ENCODE measurements at regions of chr3 and their contacts with region 1.

Region 1: GRCh38 chr3:177810162-177810623 is 612.9 kb upstream of the TBL1XR1 start:
- DNase-seq: no peak
- ATAC-seq: peak; percentile 58
- H3K4me3 ChIP-seq: no peak overlapping the region
- H3K27ac ChIP-seq: no peak overlapping the region
- H3K4me1 ChIP-seq: no peaks in the 10 kb centered on the region
- H3K27me3 ChIP-seq: no peaks in the 10 kb centered on the region

Region 2: DNA sequence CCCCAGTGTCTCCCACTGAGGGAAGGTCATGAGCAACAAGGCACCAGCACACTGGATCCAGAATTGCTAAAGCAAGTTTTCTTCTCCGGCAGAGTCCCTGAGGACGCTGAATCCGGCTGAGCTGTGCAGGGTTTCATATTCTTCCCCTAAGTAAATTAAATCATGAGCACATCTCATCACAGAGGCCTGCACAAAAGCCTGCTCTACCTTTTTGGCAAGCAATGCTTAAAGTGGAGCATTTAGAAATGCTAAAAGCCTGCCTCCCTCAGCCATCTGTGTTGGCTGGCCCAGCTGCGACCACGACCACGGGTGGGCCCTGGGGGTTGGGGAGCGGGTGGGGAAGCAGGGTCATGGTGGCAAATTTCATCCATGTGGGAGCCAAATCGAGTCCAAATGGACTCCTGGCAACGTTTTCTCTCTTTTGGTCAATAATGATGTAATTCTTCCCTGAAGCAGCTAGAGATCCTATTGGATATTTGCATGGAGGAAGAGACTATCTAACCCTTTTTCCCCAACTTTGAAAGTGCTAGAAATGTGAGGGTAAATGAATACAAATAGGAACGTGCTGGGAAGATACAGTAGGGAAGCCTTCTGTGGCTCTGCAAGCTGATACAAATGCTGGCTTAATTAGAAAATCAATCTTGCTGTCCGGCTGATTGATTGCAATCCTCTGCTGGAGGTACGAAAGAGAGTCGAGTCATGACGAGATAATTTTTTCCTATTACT is 80.1 kb before region 1 on chr3:
- intact Hi-C with region 1: loop called in 1 of 2 experiments (anchors 2 kb)
- DNase-seq: peak in 1 of 2 donors; percentile 59
- ATAC-seq: peak; percentile 86
- H3K4me3 ChIP-seq: no peak overlapping the region
- H3K27ac ChIP-seq: no peak overlapping the region
- H3K4me1 ChIP-seq: peaks cover 0 to 5% of the 10 kb centered on the region in 2 donors
- H3K27me3 ChIP-seq: no peaks in the 10 kb centered on the region

Region 3: DNA sequence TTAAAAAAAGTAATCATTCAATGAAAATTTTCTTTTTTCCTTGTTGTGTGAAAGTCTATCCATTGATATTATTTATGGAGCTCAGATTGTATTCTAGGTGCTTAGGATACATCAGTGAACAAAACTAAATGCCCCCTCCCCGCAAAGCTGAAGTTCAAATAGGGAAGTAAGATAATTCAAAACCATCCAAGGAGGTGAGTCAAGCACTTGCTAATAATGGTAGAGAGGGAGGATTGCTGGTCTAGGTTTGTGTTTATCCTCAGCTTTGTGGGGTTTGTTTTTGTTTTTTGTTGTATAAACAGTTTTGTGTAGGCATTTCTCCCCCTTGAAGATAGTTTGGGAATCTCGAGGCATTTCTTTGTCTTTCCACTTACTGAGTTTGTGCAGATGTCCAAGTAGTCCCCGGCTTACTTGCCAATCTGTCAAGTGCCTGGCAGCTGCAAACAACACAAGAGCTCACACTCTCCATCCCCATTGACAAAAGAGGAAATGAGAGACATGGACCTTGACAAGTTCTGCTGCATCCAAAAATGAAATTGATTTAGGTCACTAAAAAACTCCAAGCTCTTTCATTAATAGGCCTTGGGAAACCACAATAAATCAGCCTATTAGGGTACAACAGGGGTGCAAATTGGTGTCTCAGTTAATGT is 37.2 kb before region 1 on chr3:
- intact Hi-C with region 1: loop called in 1 of 2 experiments (anchors 5 kb)
- DNase-seq: no peak
- ATAC-seq: no peak
- H3K4me3 ChIP-seq: no peak overlapping the region
- H3K27ac ChIP-seq: peak overlapping the region; percentile 5 to 64
- H3K4me1 ChIP-seq: peaks cover 9 to 20% of the 10 kb centered on the region in 2 donors
- H3K27me3 ChIP-seq: no peaks in the 10 kb centered on the region

Region 4: GRCh38 chr3:177852001-177852816 is 42.0 kb after region 1 on chr3:
- intact Hi-C with region 1: no loop called
- DNase-seq: no peak
- ATAC-seq: no peak
- H3K4me3 ChIP-seq: no peak overlapping the region
- H3K27ac ChIP-seq: no peak overlapping the region
- H3K4me1 ChIP-seq: no peaks in the 10 kb centered on the region
- H3K27me3 ChIP-seq: no peaks in the 10 kb centered on the region